SK-N-SH (cell line): ENCODE measurements at regions of chr18 and their contacts with region 1.

Region 1: GRCh38 chr18:50203801-50204604 is 9.1 kb upstream of the MYO5B start:
- DNase-seq: peak; percentile 68
- H3K4me3 ChIP-seq: no peak overlapping the region; a peak in 1 of 4 replicates
- H3K27ac ChIP-seq: no peak overlapping the region
- H3K4me1 ChIP-seq: peaks cover 0 to 2% of the 10 kb centered on the region in 2 experiments; a peak in 1 of 4 replicates
- H3K27me3 ChIP-seq: no peaks in the 10 kb centered on the region; the same call in 1 of the 2 replicates
- CTCF ChIP-seq: peak; percentile 66
- EP300 ChIP-seq: no peak
- RAD21 ChIP-seq: peak; percentile 79

Region 2: DNA sequence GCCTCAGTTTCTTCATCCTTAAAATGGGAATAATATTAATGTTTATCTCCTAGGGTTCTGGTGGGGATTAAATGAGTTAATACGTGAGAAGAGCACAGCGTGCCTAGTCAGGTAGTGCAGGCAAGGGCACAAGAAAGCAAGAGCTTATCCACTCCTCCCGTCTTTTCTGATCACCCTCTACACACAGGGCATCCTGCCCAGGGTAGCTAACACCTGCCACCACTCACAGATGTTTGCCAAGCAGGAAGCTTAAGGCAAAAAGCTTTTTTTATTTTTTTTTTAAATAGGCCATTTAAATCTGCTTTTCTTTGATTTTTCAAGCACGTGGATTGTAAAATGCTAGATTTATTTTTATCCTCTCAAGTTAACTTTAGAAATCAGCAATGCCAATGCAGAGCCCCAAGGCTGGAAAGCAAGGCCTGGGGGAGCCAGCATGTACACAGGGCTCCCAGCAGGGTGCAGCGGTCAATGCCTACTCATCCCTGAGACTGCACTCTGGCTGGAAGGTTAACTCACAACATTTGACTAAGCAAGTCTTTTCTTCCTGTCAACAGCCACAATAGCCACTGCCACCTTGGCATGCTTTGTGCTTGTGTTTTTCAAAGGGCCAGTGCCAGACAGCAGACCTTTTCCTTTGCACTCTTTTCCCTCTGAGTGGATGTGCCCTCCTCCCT is 304.2 kb before region 1 on chr18:
- CTCF ChIA-PET with region 1: interaction called, 12 read pairs
- POLR2A ChIA-PET with region 1: no interaction called
- DNase-seq: peak; percentile 51
- H3K4me3 ChIP-seq: no peak overlapping the region
- H3K27ac ChIP-seq: no peak overlapping the region
- H3K4me1 ChIP-seq: no peaks in the 10 kb centered on the region
- H3K27me3 ChIP-seq: no peaks in the 10 kb centered on the region
- CTCF ChIP-seq: no peak; the same call in 1 of the 2 replicates
- EP300 ChIP-seq: no peak
- RAD21 ChIP-seq: peak; percentile 56

Region 3: DNA sequence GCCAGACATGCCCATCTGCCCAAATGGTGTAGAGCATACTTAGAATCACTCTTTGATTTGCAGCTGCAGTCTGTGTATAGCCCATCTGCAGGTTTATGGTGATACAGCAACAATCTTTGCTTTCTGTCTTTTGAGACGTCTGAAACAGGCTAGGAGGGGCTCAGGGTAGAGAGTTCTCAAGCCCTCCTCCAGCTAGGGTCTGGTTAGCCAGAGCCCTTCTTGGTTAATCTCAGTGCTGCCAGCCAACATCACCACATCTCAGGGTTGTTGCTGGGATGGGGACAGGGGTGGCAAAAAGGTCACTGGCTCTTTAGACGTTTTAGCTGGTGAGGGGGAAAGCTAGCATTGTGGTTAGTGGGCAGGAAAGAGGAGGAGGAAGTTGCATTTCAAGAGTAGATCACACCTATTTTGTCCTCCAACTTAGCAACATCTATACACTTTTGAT is 254.0 kb before region 1 on chr18:
- CTCF ChIA-PET with region 1: interaction called, 12 read pairs
- POLR2A ChIA-PET with region 1: no interaction called
- DNase-seq: no peak
- H3K4me3 ChIP-seq: no peak overlapping the region
- H3K27ac ChIP-seq: no peak overlapping the region
- H3K4me1 ChIP-seq: no peaks in the 10 kb centered on the region; a peak in 1 of 4 replicates
- H3K27me3 ChIP-seq: peaks cover 3% of the 10 kb centered on the region; the same call in 1 of the 2 replicates
- CTCF ChIP-seq: no peak
- EP300 ChIP-seq: no peak
- RAD21 ChIP-seq: no peak

Region 4: DNA sequence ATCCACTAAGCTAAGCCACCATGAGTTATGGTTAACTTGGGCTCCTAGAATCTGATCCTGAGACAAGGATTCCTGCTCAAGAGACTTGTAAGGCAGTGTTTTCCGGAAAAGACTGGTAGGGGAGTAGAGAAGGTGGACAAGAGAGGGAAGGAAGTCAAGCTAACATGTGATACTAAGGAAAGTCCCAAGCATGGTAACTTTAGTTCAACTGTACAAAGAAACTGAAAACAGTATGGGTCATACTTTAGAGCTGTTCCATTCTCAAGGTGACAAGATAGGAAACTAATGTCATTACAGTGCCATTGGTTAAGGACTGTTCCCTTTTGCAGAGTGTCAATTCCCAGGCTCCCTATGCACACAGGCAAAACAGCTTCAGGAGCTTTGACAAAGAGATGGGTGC is 14.8 kb before region 1 on chr18:
- CTCF ChIA-PET with region 1: interaction called, 27 read pairs
- POLR2A ChIA-PET with region 1: no interaction called
- DNase-seq: no peak
- H3K4me3 ChIP-seq: no peak overlapping the region
- H3K27ac ChIP-seq: no peak overlapping the region
- H3K4me1 ChIP-seq: no peaks in the 10 kb centered on the region; a peak in 1 of 4 replicates
- H3K27me3 ChIP-seq: peaks cover 25% of the 10 kb centered on the region
- CTCF ChIP-seq: no peak
- EP300 ChIP-seq: no peak
- RAD21 ChIP-seq: no peak

Region 5: GRCh38 chr18:50218432-50219197 is 14.6 kb after region 1 on chr18:
- CTCF ChIA-PET with region 1: interaction called, 17 read pairs
- POLR2A ChIA-PET with region 1: no interaction called
- DNase-seq: no peak
- H3K4me3 ChIP-seq: no peak overlapping the region
- H3K27ac ChIP-seq: no peak overlapping the region
- H3K4me1 ChIP-seq: no peaks in the 10 kb centered on the region
- H3K27me3 ChIP-seq: peaks cover 6% of the 10 kb centered on the region
- CTCF ChIP-seq: peak; percentile 45
- EP300 ChIP-seq: no peak
- RAD21 ChIP-seq: peak; percentile 29